Dendritic cell treated with granulocyte-macrophage colony-stimulating factor and Interleukin-4, amounts not matched to agents 40 ng/mL and 50 ng/mL, for 4 days (primary cell): ENCODE measurements at regions of chr13 and their contacts with region 1.

Region 1: DNA sequence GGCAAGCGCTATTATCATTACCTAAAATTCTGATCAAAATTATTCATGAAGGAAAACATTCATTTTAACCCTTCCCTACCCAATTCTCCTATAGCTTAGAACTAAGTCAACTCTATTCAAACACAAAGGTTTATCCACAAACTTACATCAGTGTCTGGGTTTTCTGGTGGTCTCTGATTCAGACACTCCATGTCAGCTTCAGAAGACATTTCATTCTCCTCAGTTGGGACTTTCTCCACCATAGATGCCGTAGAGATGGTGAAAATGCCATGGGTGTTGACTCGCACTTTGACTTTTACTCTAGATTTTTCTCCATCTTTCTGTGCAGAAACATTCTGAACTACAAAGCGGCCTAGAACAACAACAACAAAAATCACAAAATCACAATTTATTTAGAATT is 16.3 kb downstream of the HSPH1 start:
- H3K4me3 Mint-ChIP-seq: no peak overlapping the region
- H3K27ac Mint-ChIP-seq: no peak overlapping the region
- H3K4me1 Mint-ChIP-seq: peaks cover 32% of the 10 kb centered on the region
- H3K27me3 Mint-ChIP-seq: no peaks in the 10 kb centered on the region

Region 2: DNA sequence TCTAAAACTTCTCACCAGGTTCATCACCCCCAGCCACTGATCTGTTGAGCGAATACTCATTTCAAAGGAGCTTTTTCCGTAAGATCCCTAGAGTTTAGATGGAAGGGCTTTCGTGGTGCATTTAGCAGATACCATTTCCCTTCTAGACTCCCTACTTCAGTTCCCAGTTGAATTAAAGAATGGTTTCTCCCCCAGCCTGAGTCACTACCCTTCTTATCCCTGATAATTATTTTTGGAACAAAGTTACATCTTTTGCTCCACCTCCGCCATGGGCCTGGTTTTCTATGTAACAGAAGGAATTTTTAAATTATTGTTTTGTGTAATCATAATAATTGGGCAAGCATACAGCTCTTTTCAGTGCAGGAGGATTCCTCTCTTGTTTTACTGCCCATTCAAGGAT is 505.7 kb before region 1 on chr13:
- intact Hi-C with region 1: loop called (anchors 10 kb)
- H3K4me3 Mint-ChIP-seq: no peak overlapping the region
- H3K27ac Mint-ChIP-seq: no peak overlapping the region
- H3K4me1 Mint-ChIP-seq: peaks cover 19% of the 10 kb centered on the region
- H3K27me3 Mint-ChIP-seq: no peaks in the 10 kb centered on the region